ENCODE measurements at regions of chr5 and their contacts with region 1.

Region 1: GRCh38 chr5:52915176-52915875 is 73.8 kb upstream of the ITGA2 start:
- DNase-seq: peak; percentile 47 to 80 (median 63)
- H3K4me3 ChIP-seq: peak overlapping the region in 1 of 4 donors; percentile 25
- H3K27ac ChIP-seq: peak overlapping the region in 2 of 5 donors; percentile 48 to 65
- H3K4me1 ChIP-seq: peaks cover under 1 to 28% of the 10 kb centered on the region in 2 donors
- H3K27me3 ChIP-seq: no peaks in the 10 kb centered on the region
- CTCF ChIP-seq: peak; percentile 60 to 91 (median 82)
- POLR2A ChIP-seq: no peak

Region 2: GRCh38 chr5:52684056-52684455 is 231.3 kb before region 1 on chr5:
- intact Hi-C with region 1: loop called in 1 of 2 experiments (anchors 10 kb)
- DNase-seq: no peak
- H3K4me3 ChIP-seq: no peak overlapping the region
- H3K27ac ChIP-seq: no peak overlapping the region
- H3K4me1 ChIP-seq: no peaks in the 10 kb centered on the region
- H3K27me3 ChIP-seq: no peaks in the 10 kb centered on the region
- CTCF ChIP-seq: no peak
- POLR2A ChIP-seq: no peak

Region 3: GRCh38 chr5:52787600-52788504 is 127.5 kb before region 1 on chr5 and contains the starts of genes ITGA1 and PELO:
- intact Hi-C with region 1: loop called in 1 of 2 experiments (anchors 5 kb)
- DNase-seq: peak; percentile 80 to 93 (median 87)
- H3K4me3 ChIP-seq: peak within 1 kb of the TSS; percentile 14 to 88 (median 57)
- H3K27ac ChIP-seq: peak within 1 kb of the TSS; percentile 51 to 94 (median 85)
- H3K4me1 ChIP-seq: peaks cover 0 to 45% of the 10 kb centered on the region in 2 donors
- H3K27me3 ChIP-seq: no peaks in the 10 kb centered on the region
- CTCF ChIP-seq: peak in 5 of 6 experiments; percentile 37 to 42 (median 40)
- POLR2A ChIP-seq: peak in 1 of 2 donors; percentile 82
- total RNA-seq, gene ITGA1: 137 to 371 (median 164) TPM
- total RNA-seq, gene PELO: 60.3 to 147 (median 89.4) TPM

Region 4: GRCh38 chr5:52981507-52981906 is 66.2 kb after region 1 on chr5:
- intact Hi-C with region 1: no loop called
- DNase-seq: no peak
- H3K4me3 ChIP-seq: no peak overlapping the region
- H3K27ac ChIP-seq: no peak overlapping the region
- H3K4me1 ChIP-seq: no peaks in the 10 kb centered on the region
- H3K27me3 ChIP-seq: no peaks in the 10 kb centered on the region
- CTCF ChIP-seq: no peak
- POLR2A ChIP-seq: no peak